ENCODE measurements at regions of chr17 and their contacts with region 1.

Region 1: GRCh38 chr17:35242805-35243560 is at the start of gene SLFN5:
- H3K4me3 Mint-ChIP-seq: peak within 1 kb of the TSS; percentile 94
- H3K27ac Mint-ChIP-seq: peak within 1 kb of the TSS; percentile 99
- H3K4me1 Mint-ChIP-seq: peaks cover 50% of the 10 kb centered on the region
- H3K27me3 Mint-ChIP-seq: peaks cover 7% of the 10 kb centered on the region

Region 2: GRCh38 chr17:35189291-35189690 is 53.7 kb before region 1 on chr17:
- intact Hi-C with region 1: loop called (anchors 5 kb)
- H3K4me3 Mint-ChIP-seq: no peak overlapping the region
- H3K27ac Mint-ChIP-seq: no peak overlapping the region
- H3K4me1 Mint-ChIP-seq: peaks cover 32% of the 10 kb centered on the region
- H3K27me3 Mint-ChIP-seq: peaks cover 29% of the 10 kb centered on the region

Region 3: GRCh38 chr17:35286120-35286781 is 43.3 kb after region 1 on chr17:
- intact Hi-C with region 1: loop called (anchors 5 kb)
- H3K4me3 Mint-ChIP-seq: no peak overlapping the region
- H3K27ac Mint-ChIP-seq: no peak overlapping the region
- H3K4me1 Mint-ChIP-seq: peaks cover 23% of the 10 kb centered on the region
- H3K27me3 Mint-ChIP-seq: peaks cover 59% of the 10 kb centered on the region